Activated B cell treated with CpG ODN at 0.5 μM for 24 hours (primary cell): ENCODE measurements at regions of chr6 and their contacts with region 1.

Region 1: GRCh38 chr6:158718461-158719046 is 68.7 kb downstream of the SYTL3 start:
- DNase-seq: no peak
- ATAC-seq: no peak
- H3K4me3 Mint-ChIP-seq: no peak overlapping the region
- H3K27ac Mint-ChIP-seq: peak overlapping the region; percentile 97
- H3K4me1 Mint-ChIP-seq: peaks cover 78% of the 10 kb centered on the region
- H3K27me3 Mint-ChIP-seq: no peaks in the 10 kb centered on the region
- CTCF ChIP-seq: no peak

Region 2: DNA sequence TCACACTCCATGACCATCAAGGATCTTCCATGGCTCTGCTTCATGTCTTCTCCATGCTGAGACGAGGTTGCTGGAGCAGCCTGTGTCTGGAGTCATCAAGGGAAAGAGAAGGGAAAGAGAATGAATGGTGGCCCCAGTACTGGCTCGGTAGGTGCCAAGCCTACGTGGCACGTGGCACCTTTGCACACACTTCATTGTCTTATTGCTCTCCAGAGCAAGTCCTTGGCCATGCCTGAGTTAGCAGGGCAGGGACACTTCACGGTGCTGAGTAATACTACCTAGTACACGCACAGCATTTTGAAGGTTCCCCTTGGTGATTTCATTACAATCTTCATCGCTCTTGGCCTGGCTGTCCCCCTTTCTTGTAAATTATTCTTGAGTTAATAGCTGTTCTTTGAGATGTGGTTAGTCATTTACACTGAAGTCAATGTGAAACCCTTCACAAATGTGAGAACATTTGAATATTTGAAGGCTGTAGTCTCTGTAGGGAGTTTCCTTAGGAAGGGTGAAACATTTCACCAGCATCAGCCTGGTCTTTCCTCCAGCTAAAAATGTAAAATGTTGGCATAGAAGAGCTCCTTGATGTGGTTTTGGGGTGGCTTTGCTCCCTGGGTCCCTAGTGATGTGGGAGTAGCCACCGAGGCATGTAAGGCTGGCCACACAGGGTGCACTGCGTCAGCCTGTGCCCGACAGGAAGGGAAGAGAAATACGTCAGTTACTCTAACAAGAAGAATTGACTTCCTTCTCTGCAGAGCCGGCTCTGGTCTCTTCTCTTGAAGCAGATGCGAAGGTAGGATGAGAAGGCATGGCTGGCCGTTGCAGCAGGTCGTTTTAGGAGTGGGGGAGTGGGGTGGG is 69.0 kb before region 1 on chr6 and contains the start of gene SYTL3:
- CTCF ChIA-PET with region 1: no interaction called
- POLR2A ChIA-PET with region 1: interaction called, 14 read pairs
- intact Hi-C with region 1: loop called (anchors 2 kb)
- DNase-seq: peak; percentile 57
- ATAC-seq: peak; percentile 72
- H3K4me3 Mint-ChIP-seq: peak within 1 kb of the TSS; percentile 86
- H3K27ac Mint-ChIP-seq: peak within 1 kb of the TSS; percentile 100
- H3K4me1 Mint-ChIP-seq: peaks cover 49% of the 10 kb centered on the region
- H3K27me3 Mint-ChIP-seq: peaks cover 2% of the 10 kb centered on the region
- CTCF ChIP-seq: no peak
- total RNA-seq, gene SYTL3: 5.8 and 6.0 TPM in 2 replicates

Region 3: DNA sequence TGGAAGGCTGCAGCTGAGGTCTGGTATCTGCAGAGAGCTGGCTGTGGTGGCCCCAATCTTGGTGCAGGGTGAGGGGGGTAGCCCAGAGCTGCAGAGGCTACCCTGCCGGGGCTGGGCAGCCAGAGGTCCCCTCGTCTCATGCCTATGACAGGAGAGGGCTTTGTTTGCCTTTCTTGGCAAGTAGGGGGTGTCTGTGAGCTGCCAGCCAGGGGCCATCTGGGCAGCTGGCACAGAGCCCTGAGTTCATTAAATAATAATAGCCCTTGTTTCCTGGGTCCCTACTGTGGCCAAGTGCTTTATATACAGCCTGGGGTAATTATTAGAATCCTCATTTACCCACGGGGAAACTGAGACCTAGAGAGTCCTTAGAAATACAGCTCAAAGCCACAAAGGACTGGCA is 34.1 kb after region 1 on chr6:
- CTCF ChIA-PET with region 1: interaction called, 3 read pairs
- POLR2A ChIA-PET with region 1: interaction called, 7 read pairs
- intact Hi-C with region 1: loop called (anchors 2 kb)
- DNase-seq: no peak
- ATAC-seq: peak; percentile 47
- H3K4me3 Mint-ChIP-seq: no peak overlapping the region
- H3K27ac Mint-ChIP-seq: no peak overlapping the region
- H3K4me1 Mint-ChIP-seq: peaks cover 7% of the 10 kb centered on the region
- H3K27me3 Mint-ChIP-seq: no peaks in the 10 kb centered on the region
- CTCF ChIP-seq: no peak

Region 4: GRCh38 chr6:158772851-158773371 is 54.4 kb after region 1 on chr6:
- CTCF ChIA-PET with region 1: no interaction called
- POLR2A ChIA-PET with region 1: interaction called, 11 read pairs
- intact Hi-C with region 1: no loop called
- DNase-seq: no peak
- ATAC-seq: no peak
- H3K4me3 Mint-ChIP-seq: no peak overlapping the region
- H3K27ac Mint-ChIP-seq: no peak overlapping the region
- H3K4me1 Mint-ChIP-seq: no peaks in the 10 kb centered on the region
- H3K27me3 Mint-ChIP-seq: no peaks in the 10 kb centered on the region
- CTCF ChIP-seq: no peak

Region 5: GRCh38 chr6:158793432-158793831 is 74.9 kb after region 1 on chr6:
- CTCF ChIA-PET with region 1: no interaction called
- POLR2A ChIA-PET with region 1: interaction called, 10 read pairs
- intact Hi-C with region 1: loop called (anchors 2 kb)
- DNase-seq: no peak
- ATAC-seq: peak; percentile 54
- H3K4me3 Mint-ChIP-seq: peak overlapping the region; percentile 44
- H3K27ac Mint-ChIP-seq: peak overlapping the region; percentile 70
- H3K4me1 Mint-ChIP-seq: peaks cover 95% of the 10 kb centered on the region
- H3K27me3 Mint-ChIP-seq: no peaks in the 10 kb centered on the region
- CTCF ChIP-seq: no peak

Region 6: GRCh38 chr6:158910484-158911348 is 192.2 kb after region 1 on chr6:
- CTCF ChIA-PET with region 1: interaction called, 3 read pairs
- POLR2A ChIA-PET with region 1: interaction called, 8 read pairs
- intact Hi-C with region 1: loop called (anchors 2 kb)
- DNase-seq: peak; percentile 36
- ATAC-seq: peak; percentile 76
- H3K4me3 Mint-ChIP-seq: peak overlapping the region; percentile 80
- H3K27ac Mint-ChIP-seq: peak overlapping the region; percentile 96
- H3K4me1 Mint-ChIP-seq: peaks cover 58% of the 10 kb centered on the region
- H3K27me3 Mint-ChIP-seq: no peaks in the 10 kb centered on the region
- CTCF ChIP-seq: no peak